Activated T-helper 1 cell treated with anti-CD3 and anti-CD28 coated beads, Interleukin-12 subunit alpha, Interleukin-12 subunit beta, Interleukin-2, Interleukin-4 antibody, amounts not matched to agents 30 ng/mL and 10 ng/mL and 1 ng/mL, durations not matched to agents 14 hours and 24 hours and 36 hours (primary cell): ENCODE measurements at regions of chr1 and their contacts with region 1.

Region 1: GRCh38 chr1:167220537-167221125 is at the start of gene POU2F1:
- DNase-seq: peak; percentile 98
- H3K4me3 Mint-ChIP-seq: peak within 1 kb of the TSS; percentile 93
- H3K27ac Mint-ChIP-seq: peak within 1 kb of the TSS; percentile 93
- H3K4me1 Mint-ChIP-seq: peaks cover 42% of the 10 kb centered on the region
- H3K27me3 Mint-ChIP-seq: peaks cover 4% of the 10 kb centered on the region
- total RNA-seq, gene POU2F1: 20.2 and 24.6 TPM in 2 replicates

Region 2: GRCh38 chr1:166838766-166839599 is 381.6 kb before region 1 on chr1 and contains the start of gene POGK:
- intact Hi-C with region 1: loop called (anchors 2 kb)
- DNase-seq: peak; percentile 84
- H3K4me3 Mint-ChIP-seq: peak within 1 kb of the TSS; percentile 94
- H3K27ac Mint-ChIP-seq: peak within 1 kb of the TSS; percentile 97
- H3K4me1 Mint-ChIP-seq: peaks cover 64% of the 10 kb centered on the region
- H3K27me3 Mint-ChIP-seq: no peaks in the 10 kb centered on the region
- total RNA-seq, gene POGK: 51.4 and 54.1 TPM in 2 replicates

Region 3: GRCh38 chr1:166975361-166976129 is 245.1 kb before region 1 on chr1 and contains the start of gene ILDR2:
- intact Hi-C with region 1: loop called (anchors 5 kb)
- DNase-seq: peak; percentile 41
- H3K4me3 Mint-ChIP-seq: peak within 1 kb of the TSS; percentile 94
- H3K27ac Mint-ChIP-seq: peak within 1 kb of the TSS; percentile 80
- H3K4me1 Mint-ChIP-seq: peaks cover 58% of the 10 kb centered on the region
- H3K27me3 Mint-ChIP-seq: peaks cover 28% of the 10 kb centered on the region
- total RNA-seq, gene ILDR2: 11.3 and 14.4 TPM in 2 replicates

Region 4: DNA sequence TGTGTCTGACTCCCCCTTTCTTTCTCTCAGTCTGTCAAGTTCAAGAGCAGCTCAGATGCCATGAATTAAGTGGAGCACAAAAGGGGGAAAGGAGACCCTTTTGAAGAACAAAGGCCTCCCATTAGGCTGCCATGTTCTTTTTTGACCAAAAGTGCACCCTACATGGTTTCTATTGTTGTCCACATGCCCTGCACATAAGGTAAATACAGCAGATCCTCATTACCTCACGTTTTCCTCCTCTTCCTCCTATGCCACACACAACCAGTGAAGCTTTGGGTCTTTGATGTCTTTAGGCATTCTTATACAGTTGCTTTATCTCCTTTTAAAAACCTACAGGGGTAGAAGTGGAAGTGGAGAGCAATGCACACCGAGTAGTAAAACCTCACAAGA is 47.8 kb after region 1 on chr1:
- intact Hi-C with region 1: loop called (anchors 2 kb)
- DNase-seq: no peak
- H3K4me3 Mint-ChIP-seq: no peak overlapping the region
- H3K27ac Mint-ChIP-seq: no peak overlapping the region
- H3K4me1 Mint-ChIP-seq: peaks cover 20% of the 10 kb centered on the region
- H3K27me3 Mint-ChIP-seq: no peaks in the 10 kb centered on the region

Region 5: DNA sequence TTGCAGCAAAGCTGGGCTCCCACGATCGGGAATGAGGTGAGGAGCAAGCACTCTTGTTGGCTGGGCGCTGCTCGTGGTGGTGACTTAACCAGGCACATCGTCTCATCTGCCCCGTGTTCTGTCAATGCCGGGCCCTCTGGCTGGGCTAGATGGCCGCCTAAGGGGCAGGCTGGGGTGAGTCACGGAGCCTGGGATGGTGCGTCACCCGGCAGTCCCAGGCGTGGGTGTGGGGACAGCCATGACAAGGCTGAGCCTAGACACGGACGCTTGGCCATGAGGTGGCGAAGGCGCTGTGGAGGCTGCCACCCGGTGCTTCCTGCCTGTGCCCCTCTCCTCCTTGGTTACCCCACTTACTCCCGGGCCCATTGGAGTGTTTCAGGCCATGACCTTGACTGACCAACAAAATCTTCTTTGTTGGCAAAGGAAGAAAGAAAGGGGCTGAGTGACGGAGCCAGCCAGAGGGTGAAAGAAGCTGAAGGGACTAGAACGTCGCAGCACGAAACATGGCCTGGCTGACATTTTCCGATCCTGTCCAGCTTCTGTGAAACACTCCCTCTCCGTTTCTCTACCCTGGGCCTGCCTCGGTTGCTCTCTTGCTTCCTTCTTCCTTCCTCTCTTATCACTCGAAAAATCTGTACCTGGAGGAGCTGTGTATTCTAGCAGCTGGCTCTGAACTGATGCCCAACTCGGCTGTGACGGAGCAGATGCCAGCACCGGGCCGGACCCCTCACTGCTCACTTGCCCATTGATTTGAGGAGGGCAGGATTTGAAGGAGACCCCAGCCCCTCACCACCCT is 297.1 kb after region 1 on chr1:
- intact Hi-C with region 1: loop called (anchors 1 kb)
- DNase-seq: peak; percentile 76
- H3K4me3 Mint-ChIP-seq: peak overlapping the region; percentile 97
- H3K27ac Mint-ChIP-seq: peak overlapping the region; percentile 98
- H3K4me1 Mint-ChIP-seq: peaks cover 59% of the 10 kb centered on the region
- H3K27me3 Mint-ChIP-seq: peaks cover 7% of the 10 kb centered on the region

Region 6: DNA sequence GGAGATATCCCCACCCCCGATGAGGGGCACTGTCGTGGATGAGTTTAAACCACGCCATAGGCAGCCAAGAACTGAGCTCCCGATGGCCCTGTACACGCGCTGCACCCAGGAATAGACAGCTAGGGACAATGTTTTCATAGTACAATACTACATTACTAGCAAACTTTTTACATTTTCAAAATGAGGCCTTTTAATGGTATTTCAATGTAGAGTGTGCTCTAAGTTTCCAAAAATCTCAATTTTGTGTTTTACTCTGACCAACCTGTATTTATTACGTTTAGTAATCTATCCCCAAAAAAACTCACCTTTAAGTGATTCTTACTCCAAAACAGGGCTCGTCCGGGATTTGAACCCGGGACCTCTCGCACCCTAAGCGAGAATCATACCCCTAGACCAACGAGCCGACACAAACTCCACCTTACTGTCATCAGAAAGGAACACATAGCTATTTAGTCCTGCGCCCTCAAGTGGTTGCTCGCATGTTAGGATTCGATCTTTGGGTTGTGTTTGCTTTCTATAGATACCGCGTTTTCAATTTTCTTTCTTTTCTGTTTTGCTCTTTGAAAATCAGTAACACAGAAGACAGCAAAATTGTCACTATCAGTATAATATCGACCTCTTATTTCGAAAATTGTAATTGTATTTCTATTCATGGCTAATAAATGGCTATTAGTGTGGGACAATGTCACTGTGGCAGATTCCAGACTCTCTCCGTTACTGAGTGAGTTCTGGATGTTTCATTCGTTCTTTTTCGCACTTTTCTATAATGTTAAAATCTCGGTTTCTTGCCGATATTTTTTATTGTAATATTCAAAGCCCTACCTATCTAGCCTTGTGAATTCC is 494.7 kb after region 1 on chr1:
- intact Hi-C with region 1: loop called (anchors 2 kb)
- DNase-seq: peak; percentile 84
- H3K4me3 Mint-ChIP-seq: peak overlapping the region; percentile 96
- H3K27ac Mint-ChIP-seq: peak overlapping the region; percentile 91
- H3K4me1 Mint-ChIP-seq: peaks cover 61% of the 10 kb centered on the region
- H3K27me3 Mint-ChIP-seq: peaks cover 21% of the 10 kb centered on the region